Activated T-helper 1 cell treated with anti-CD3 and anti-CD28 coated beads, Interleukin-12 subunit alpha, Interleukin-12 subunit beta, Interleukin-2, Interleukin-4 antibody, amounts not matched to agents 30 ng/mL and 10 ng/mL and 1 ng/mL, durations not matched to agents 14 hours and 24 hours and 36 hours (primary cell): ENCODE measurements at regions of chr2 and their contacts with region 1.

Region 1: DNA sequence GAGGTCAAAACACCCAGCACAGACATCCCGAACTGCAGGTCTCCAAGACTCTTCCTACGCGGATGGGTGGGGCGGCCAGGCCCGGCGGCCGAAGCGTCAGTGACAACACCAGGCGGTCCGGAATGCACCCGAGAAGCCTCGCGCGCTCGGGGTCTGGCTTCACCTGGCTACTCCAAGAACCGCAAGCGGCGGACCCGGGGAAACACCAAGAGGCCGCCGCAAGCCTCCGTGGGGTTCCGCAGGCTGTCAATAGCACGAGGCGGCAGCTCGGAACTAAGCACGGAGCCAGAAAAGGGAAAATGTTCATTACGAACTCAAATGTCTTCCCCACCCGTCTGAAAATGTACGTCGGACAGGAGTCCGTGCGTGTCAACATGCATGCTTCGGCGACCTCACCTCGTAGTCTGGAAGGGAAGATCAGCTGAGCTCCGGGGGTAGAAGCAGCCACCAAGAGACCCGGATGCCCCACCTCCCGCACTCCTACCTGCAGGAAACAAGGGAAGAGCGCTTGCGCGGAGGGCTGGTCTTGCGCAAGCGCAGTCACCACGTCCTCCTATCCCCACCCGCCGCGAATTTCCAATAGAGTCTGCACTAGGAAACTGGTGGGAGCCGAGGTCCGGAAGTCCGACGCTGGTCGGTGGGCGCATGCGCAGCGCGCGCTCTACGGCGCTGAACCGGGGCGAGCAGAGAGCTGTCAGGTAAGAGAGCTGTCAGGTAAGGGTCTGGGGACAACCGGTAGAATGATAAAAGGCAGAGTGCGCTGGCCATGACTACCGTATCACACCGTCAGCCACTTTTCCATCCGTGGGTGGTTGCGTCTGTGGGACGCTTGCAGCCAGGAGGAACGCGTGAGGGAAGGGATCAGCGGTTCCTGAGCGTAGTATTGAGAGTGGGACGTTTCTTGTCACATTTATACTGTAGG is at the starts of genes GPATCH11 and HEATR5B:
- DNase-seq: peak; percentile 92
- H3K4me3 Mint-ChIP-seq: no peak within 1 kb of the TSS
- H3K27ac Mint-ChIP-seq: peak within 1 kb of the TSS; percentile 19
- H3K4me1 Mint-ChIP-seq: peaks cover 26% of the 10 kb centered on the region
- H3K27me3 Mint-ChIP-seq: no peaks in the 10 kb centered on the region
- total RNA-seq, gene GPATCH11: 16.6 and 17.6 TPM in 2 replicates
- total RNA-seq, gene HEATR5B: 15.7 and 16.0 TPM in 2 replicates

Region 2: GRCh38 chr2:36785179-36785795 is 298.8 kb before region 1 on chr2:
- intact Hi-C with region 1: loop called (anchors 10 kb)
- DNase-seq: peak; percentile 55
- H3K4me3 Mint-ChIP-seq: no peak overlapping the region
- H3K27ac Mint-ChIP-seq: no peak overlapping the region
- H3K4me1 Mint-ChIP-seq: peaks cover 3% of the 10 kb centered on the region
- H3K27me3 Mint-ChIP-seq: peaks cover 28% of the 10 kb centered on the region

Region 3: DNA sequence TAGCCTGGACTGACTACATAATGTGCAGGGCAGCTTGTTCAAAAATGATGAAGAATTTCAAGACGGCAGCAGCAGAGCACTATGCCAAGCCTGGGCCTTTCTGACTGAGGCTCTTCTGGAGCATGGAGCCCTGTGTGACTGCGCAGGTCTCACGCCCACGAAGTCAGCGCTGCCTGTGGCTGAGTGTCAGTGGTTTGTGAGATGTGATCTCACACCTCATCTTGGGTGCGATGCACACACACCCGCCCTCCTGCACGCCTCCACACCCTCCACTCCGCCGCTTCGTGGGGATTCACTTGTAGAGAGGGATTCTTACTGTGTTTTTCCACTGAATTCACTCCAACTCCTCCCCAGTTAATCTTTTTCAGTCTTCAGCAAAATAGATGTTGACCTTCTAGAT is 283.8 kb before region 1 on chr2:
- intact Hi-C with region 1: loop called (anchors 1 kb)
- DNase-seq: no peak
- H3K4me3 Mint-ChIP-seq: no peak overlapping the region
- H3K27ac Mint-ChIP-seq: peak overlapping the region; percentile 52
- H3K4me1 Mint-ChIP-seq: peaks cover 17% of the 10 kb centered on the region
- H3K27me3 Mint-ChIP-seq: peaks cover 8% of the 10 kb centered on the region

Region 4: GRCh38 chr2:36966370-36967235 is 117.5 kb before region 1 on chr2 and contains the start of gene STRN:
- intact Hi-C with region 1: loop called (anchors 1 kb)
- DNase-seq: peak; percentile 99
- H3K4me3 Mint-ChIP-seq: peak within 1 kb of the TSS; percentile 95
- H3K27ac Mint-ChIP-seq: peak within 1 kb of the TSS; percentile 98
- H3K4me1 Mint-ChIP-seq: peaks cover 61% of the 10 kb centered on the region
- H3K27me3 Mint-ChIP-seq: no peaks in the 10 kb centered on the region
- total RNA-seq, gene STRN: 28.8 and 29.0 TPM in 2 replicates

Region 5: DNA sequence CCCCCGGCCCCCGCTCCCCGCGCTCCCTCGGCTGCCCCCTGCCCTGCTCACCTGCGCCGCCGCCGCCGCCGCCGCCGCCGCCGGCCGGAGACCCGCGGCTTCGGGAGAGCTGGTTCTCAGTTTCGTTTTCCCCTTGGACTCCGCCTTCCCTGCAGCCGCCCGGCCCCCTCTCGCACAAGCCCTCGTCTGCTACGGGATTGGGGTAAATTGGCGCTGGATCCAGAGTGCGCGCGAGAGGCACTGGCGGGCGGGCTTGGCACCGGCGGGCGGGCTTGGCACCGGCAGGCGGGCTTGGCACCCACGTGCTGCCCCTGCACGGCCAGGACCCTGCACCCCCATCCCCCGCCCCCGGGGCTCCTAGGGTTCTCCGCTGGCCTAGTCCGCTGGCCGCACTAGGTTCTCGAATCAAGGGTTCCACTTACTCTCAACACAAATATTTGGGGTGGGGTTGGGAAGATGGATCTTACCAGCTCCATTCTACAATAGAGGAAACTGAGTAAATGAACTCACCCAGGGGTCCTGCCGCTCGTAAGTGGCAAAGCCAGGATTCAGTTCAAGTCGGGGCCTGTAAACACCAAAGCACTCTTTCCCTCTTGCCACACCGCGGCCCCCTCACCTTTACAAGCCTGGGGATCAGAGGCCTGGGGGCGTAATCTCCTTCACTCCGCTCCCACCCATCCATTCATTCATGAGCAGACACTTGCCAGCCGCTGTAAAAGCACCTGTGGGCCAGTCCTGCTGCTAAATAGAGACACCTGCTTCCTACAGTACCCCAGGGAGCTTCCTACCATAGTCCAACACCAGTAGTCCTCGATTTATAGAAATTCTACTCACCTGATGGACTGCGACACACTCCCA is 73.0 kb after region 1 on chr2 and contains the start of gene EIF2AK2:
- intact Hi-C with region 1: loop called (anchors 2 kb)
- DNase-seq: peak; percentile 84
- H3K4me3 Mint-ChIP-seq: peak within 1 kb of the TSS; percentile 89
- H3K27ac Mint-ChIP-seq: peak within 1 kb of the TSS; percentile 93
- H3K4me1 Mint-ChIP-seq: peaks cover 46% of the 10 kb centered on the region
- H3K27me3 Mint-ChIP-seq: no peaks in the 10 kb centered on the region
- total RNA-seq, gene EIF2AK2: 40.5 and 41.9 TPM in 2 replicates

Region 6: DNA sequence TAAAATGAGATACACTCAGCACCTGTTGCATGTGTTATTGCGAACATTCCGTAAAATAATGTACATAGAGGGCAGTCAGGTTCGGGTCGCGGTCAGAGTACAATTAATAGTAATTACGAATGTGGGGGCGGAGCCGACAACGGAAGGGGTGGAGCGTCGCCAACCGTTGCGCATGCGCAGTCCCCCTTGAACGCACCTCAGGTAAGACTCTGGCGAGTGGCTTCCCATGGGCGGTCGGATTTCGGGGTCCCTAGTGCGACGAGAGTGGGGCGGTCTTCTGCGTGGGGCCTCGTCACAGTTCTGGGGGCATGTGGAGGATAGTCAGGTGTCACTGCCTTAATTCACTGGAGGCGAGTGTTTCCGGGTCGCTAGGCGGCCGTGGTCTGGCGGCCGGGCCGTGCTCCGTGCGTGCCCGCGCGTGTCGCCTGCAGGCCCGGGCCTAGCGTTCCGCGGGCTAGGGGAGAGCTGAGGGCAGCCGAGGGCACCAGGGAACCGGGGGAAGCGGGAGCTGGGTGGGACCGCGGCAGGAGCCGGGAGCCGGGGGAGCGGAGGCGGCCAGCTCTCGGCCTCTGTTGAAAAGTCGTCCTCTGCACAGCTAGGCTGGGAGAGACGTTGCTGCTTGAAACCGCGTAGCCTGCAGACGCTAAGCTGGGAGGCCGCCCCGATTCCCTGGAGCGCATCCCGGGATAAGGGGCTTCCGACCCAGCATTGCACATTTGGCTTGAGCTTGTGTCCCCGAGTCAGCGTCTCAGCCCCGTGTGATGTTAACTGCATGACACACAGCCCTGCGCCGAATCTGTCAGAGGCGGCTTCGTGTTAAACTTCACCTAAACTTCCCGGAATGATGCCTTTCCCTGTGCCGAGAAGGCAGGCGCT is 112.4 kb after region 1 on chr2 and contains the start of gene CEBPZOS:
- intact Hi-C with region 1: loop called (anchors 2 kb)
- DNase-seq: peak; percentile 80
- H3K4me3 Mint-ChIP-seq: peak within 1 kb of the TSS; percentile 99
- H3K27ac Mint-ChIP-seq: peak within 1 kb of the TSS; percentile 100
- H3K4me1 Mint-ChIP-seq: peaks cover 41% of the 10 kb centered on the region
- H3K27me3 Mint-ChIP-seq: no peaks in the 10 kb centered on the region
- total RNA-seq, gene CEBPZOS: 39.5 and 45.3 TPM in 2 replicates

Region 7: DNA sequence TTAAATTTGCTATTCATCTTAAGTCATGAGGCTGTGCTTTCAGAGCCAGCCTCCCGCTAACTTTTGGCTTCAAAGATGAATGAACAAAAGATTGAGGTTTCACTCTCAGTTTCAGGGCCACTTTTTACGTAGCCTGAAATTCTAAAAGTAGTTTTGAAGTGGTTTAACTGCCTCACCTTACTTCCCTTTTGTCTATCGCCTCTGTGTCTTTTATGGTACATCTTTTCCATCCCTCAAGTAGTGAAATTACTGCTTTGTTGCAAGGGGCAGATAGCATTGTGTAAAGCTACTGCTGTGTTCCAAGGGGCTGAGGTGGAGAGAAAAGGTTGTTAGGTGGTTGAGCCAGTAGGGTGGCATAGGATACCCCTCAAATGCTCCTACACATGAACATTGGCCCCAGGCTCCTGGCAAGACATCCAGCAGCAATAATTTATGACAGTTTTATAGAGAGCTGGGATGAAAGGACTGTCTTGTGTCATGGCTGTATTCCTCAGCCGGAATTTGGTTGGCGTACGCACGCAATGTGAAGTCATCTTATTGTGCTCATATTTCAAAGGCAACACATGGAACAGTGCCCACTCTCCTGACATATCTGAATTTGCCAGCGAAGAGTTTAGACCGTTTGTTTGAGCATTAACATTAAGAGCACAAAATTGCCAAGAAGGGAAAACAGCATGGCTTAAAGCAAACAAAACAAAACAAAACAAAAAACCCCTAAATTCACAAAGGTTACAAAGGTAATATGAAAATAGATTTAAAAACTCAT is 292.5 kb after region 1 on chr2:
- intact Hi-C with region 1: loop called (anchors 5 kb)
- DNase-seq: peak; percentile 29
- H3K4me3 Mint-ChIP-seq: peak overlapping the region; percentile 34
- H3K27ac Mint-ChIP-seq: peak overlapping the region; percentile 88
- H3K4me1 Mint-ChIP-seq: peaks cover 51% of the 10 kb centered on the region
- H3K27me3 Mint-ChIP-seq: peaks cover 51% of the 10 kb centered on the region